ENCODE measurements at regions of chr17 and their contacts with region 1.

Region 1: GRCh38 chr17:49170216-49170615 is 37.6 kb downstream of the B4GALNT2 start:
- DNase-seq: no peak
- H3K4me3 ChIP-seq: no peak overlapping the region
- H3K27ac ChIP-seq: no peak overlapping the region
- H3K4me1 ChIP-seq: no peaks in the 10 kb centered on the region
- H3K27me3 ChIP-seq: no peaks in the 10 kb centered on the region
- CTCF ChIP-seq: no peak
- POLR2A ChIP-seq: no peak

Region 2: GRCh38 chr17:49227436-49228261 is 57.4 kb after region 1 on chr17:
- intact Hi-C with region 1: loop called (anchors 10 kb)
- DNase-seq: peak; percentile 62 to 66
- H3K4me3 ChIP-seq: no peak overlapping the region
- H3K27ac ChIP-seq: no peak overlapping the region
- H3K4me1 ChIP-seq: peaks cover 0 to 11% of the 10 kb centered on the region in 2 donors
- H3K27me3 ChIP-seq: peaks cover 0 to 11% of the 10 kb centered on the region in 2 donors
- CTCF ChIP-seq: peak; percentile 56 to 71 (median 69)
- POLR2A ChIP-seq: no peak

Region 3: DNA sequence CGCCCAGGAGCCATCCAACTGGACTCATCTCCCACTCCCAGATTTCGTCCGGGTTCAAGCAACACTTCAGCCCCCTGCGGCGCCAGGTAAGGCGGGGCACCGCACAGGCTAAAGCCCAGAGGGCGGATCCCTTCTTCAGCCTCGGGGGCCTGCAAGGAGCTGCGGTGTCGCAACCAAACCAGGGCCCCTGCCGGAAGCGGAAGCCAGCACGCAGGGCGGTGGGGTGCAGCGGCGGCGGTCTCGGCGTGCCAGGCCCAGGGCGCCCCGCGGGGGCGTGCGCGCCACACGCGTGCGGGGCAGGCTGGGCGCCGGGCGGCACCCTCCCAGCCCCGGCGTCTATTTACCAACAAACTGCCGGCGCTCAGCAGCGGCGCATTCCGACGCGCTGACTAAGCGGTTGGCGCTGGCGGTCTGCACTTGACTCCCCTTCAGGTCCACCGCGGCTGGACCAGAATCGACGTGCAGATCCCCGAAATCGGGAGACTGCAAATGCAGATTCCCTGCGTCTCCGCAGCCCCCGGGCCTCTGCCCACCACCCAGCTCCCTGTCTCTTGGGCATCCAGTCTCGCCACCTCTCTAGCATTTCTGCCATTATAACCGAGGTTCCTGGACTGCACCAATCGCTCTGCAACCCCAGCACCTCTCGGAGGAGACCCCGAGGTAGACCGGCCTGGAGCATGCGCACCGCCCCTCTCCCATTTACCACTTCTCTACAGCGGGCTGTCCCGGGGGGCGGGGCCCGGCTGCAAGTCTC is 798.3 kb after region 1 on chr17:
- intact Hi-C with region 1: no loop called
- DNase-seq: peak in 1 of 2 donors; percentile 36
- H3K4me3 ChIP-seq: peak overlapping the region in 1 of 2 donors; percentile 10
- H3K27ac ChIP-seq: no peak overlapping the region
- H3K4me1 ChIP-seq: peaks cover 0 to 34% of the 10 kb centered on the region in 2 donors
- H3K27me3 ChIP-seq: peaks cover 60 to 84% of the 10 kb centered on the region in 2 donors
- CTCF ChIP-seq: no peak
- POLR2A ChIP-seq: no peak

Measured in uterus (tissue), 4 donors.